ENCODE measurements at regions of chr14 and their contacts with region 1.

Region 1: GRCh38 chr14:95993768-95994592 is 45.2 kb upstream of the C14orf132 start:
- DNase-seq: peak; percentile 44
- CTCF ChIP-seq: peak; percentile 83

Region 2: DNA sequence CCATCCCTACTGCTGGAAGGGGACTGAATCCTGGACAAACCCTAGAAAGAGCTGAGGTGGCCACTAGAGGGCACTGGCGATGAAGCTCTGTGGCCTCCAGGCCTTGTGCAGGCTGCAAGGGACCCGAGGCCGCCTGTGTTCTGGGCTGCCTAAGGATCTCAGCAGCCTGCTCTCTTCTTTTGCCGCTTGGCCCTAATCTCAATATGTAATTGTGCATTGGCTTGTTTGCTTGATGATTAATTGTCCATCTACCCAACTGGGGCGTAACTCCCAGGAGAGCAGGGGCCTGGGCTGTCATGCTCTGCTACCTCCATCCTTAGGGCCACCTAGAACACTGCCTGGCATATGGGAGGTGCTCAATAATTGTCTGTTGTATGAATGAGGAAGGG is 551.4 kb before region 1 on chr14:
- in situ Hi-C with region 1: loop called (anchors 25 kb)
- DNase-seq: peak; percentile 90
- CTCF ChIP-seq: peak; percentile 86

Region 3: GRCh38 chr14:95549656-95550585 is 444.1 kb before region 1 on chr14:
- in situ Hi-C with region 1: loop called (anchors 10 kb)
- DNase-seq: no peak
- CTCF ChIP-seq: no peak

Region 4: DNA sequence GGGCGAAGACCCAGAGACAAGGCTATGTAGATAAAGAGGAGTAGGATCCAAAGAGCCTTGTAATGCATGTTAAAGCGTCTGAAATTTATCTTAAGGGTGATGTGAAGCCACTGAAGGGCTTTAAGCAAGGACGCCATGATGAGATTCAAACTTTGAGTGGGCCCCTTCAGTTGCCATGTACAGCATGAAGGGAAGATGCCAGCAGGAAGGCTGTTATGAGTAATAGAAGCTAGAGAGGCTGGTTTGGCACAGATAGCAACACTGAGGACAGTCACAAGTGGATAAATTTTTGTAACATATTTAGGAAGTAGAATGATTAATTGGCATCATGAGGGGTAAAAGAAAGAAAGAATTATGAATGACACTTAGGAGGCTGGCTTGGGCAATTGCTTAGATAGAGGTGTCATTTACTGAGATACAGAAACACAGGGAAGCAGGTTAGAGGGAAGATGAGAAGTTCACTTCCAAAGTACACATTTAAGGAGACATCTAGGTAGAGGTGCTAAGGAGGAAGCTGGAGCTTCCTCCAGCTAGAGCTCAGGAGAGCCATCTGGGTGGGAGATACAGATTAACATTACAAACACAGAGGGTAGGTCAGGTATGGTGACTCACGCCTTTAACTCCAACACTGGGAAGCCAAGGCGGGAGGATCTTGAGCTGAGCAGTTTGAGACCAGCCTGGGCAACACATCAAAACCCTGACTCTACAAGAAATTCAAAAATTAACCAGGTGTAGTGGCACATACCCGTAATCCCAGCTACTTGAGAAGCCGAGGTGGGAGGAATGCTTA is 355.5 kb after region 1 on chr14:
- in situ Hi-C with region 1: no loop called
- DNase-seq: no peak
- CTCF ChIP-seq: no peak

Measured in GM13977 (cell line).